ENCODE measurements at regions of chr17 and their contacts with region 1.

Region 1: GRCh38 chr17:67974185-67974584 is 22.1 kb downstream of the C17orf58 start:
- DNase-seq: no peak
- ATAC-seq: no peak
- H3K4me3 ChIP-seq: no peak overlapping the region
- H3K27ac ChIP-seq: no peak overlapping the region
- H3K4me1 ChIP-seq: peaks cover 3% of the 10 kb centered on the region; the same call in 1 of the 2 replicates
- H3K27me3 ChIP-seq: no peaks in the 10 kb centered on the region
- CTCF ChIP-seq: no peak

Region 2: DNA sequence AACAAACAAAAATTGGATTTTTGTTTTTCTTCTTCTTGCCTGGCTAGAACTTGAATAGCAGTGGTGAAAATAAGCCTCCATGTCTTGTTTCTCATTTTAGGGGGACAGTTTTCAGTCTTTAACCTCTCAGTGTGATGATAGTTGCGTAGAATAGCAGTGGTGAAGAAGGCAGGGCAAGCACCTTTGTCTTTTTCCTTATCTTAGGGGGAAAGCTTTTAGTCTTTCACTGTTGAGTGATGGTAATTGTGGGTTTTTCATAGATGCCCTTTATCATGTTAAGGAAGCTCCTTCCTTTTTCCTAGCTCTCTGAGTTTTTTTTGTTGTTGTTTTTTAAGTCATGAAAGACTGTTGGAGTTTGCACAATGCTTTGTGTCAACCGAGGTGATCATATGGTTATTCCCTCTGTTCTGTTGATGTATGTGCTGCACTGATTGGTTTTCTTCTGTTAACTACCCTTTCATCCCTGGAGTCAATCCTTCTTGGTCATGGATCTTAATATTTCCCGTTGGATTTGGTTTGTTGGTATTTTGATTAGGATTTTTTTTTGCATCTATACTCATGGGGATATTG is 240.7 kb before region 1 on chr17:
- CTCF ChIA-PET with region 1: no interaction called
- POLR2A ChIA-PET with region 1: no interaction called
- intact Hi-C with region 1: no loop called
- DNase-seq: no peak
- ATAC-seq: no peak
- H3K4me3 ChIP-seq: no peak overlapping the region
- H3K27ac ChIP-seq: no peak overlapping the region
- H3K4me1 ChIP-seq: no peaks in the 10 kb centered on the region
- H3K27me3 ChIP-seq: no peaks in the 10 kb centered on the region
- CTCF ChIP-seq: no peak

Region 3: GRCh38 chr17:67959288-67959900 is 14.8 kb before region 1 on chr17:
- CTCF ChIA-PET with region 1: interaction called, 13 read pairs
- POLR2A ChIA-PET with region 1: no interaction called
- intact Hi-C with region 1: no loop called
- DNase-seq: no peak
- ATAC-seq: peak; percentile 29; the same call in 1 of the 2 replicates
- H3K4me3 ChIP-seq: no peak overlapping the region
- H3K27ac ChIP-seq: no peak overlapping the region
- H3K4me1 ChIP-seq: no peaks in the 10 kb centered on the region
- H3K27me3 ChIP-seq: no peaks in the 10 kb centered on the region
- CTCF ChIP-seq: no peak; the same call in 1 of the 2 replicates

Measured in PC-3 (cell line).